GM13977 (cell line): ENCODE measurements at regions of chr15 and their contacts with region 1.

Region 1: DNA sequence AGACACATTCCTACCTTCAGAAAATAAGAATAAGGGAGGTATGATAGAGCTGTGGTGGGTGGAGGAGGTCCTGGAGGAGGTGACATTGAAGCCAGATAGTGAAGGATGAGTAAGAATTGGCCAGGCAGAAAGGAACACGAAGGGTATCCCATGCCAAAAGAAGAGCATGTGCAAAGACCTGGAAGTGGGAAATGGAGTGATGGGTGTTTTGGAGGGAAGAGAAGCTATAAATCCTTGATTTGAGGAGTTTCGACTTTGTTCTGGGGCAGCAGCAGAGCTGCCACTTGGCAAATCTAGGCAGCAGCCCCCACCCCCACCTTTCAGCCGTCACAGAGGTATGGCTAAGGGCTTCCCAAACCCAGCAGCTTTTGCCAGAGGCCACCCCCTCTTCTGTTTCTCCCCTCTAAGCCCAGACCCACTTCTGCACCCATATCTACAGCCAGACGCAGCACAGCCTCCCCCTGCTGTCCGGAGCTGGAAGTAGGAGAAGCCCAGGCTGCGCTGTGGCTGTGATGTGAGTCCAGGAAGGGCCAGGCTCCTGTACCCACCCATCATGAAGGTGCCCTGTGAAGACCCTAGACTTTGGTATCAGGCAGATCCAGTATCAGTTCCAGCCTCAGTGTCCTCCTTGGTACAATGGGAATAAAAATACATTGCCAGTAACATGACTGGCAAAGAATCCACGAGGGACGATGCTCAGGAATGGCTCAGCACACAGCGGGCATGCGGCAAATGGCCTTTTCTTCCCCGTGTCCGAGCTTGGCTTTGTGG is 188.7 kb upstream of the LINGO1 start:
- DNase-seq: peak; percentile 83
- CTCF ChIP-seq: peak; percentile 89

Region 2: GRCh38 chr15:77633134-77633912 is 188.1 kb before region 1 on chr15:
- in situ Hi-C with region 1: loop called (anchors 25 kb)
- DNase-seq: peak; percentile 97
- CTCF ChIP-seq: peak; percentile 100

Region 3: GRCh38 chr15:77753270-77753873 is 68.0 kb before region 1 on chr15:
- in situ Hi-C with region 1: no loop called
- DNase-seq: peak; percentile 24
- CTCF ChIP-seq: no peak